Right cardiac atrium (tissue), 5 donors: ENCODE measurements at regions of chr1 and their contacts with region 1.

Region 1: GRCh38 chr1:172429331-172430127 is 9.0 kb downstream of the C1orf105 start:
- DNase-seq: no peak
- ATAC-seq: peak; percentile 39 to 51
- H3K4me3 ChIP-seq: no peak overlapping the region
- H3K27ac ChIP-seq: no peak overlapping the region
- H3K4me1 ChIP-seq: no peaks in the 10 kb centered on the region
- H3K27me3 ChIP-seq: no peaks in the 10 kb centered on the region

Region 2: DNA sequence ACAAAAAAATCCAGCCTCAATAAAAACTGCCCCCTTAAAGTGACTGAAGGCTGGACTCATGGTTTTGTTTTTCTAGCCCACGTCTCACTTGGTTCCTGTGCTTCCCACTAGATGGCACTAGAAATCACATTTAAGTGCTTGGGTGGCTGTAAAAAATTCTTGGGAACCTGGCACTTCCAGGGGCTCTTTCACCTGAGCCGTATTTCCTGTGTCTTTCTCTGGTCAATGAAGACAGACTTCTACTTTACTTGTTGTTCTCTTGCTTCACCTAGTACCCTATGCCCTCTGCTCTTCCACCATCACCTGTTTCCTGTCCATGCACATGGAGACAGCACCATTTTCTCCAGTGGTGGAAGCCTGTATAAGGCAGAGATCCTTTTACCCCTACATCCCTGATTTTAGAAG is 628.0 kb before region 1 on chr1:
- intact Hi-C with region 1: loop called in 1 of 4 experiments (anchors 10 kb)
- DNase-seq: no peak
- ATAC-seq: no peak
- H3K4me3 ChIP-seq: no peak overlapping the region
- H3K27ac ChIP-seq: no peak overlapping the region
- H3K4me1 ChIP-seq: no peaks in the 10 kb centered on the region
- H3K27me3 ChIP-seq: no peaks in the 10 kb centered on the region

Region 3: GRCh38 chr1:172002725-172003345 is 426.7 kb before region 1 on chr1:
- intact Hi-C with region 1: loop called in 1 of 4 experiments (anchors 10 kb)
- DNase-seq: no peak
- ATAC-seq: no peak
- H3K4me3 ChIP-seq: no peak overlapping the region
- H3K27ac ChIP-seq: no peak overlapping the region
- H3K4me1 ChIP-seq: no peaks in the 10 kb centered on the region
- H3K27me3 ChIP-seq: no peaks in the 10 kb centered on the region

Region 4: GRCh38 chr1:172211221-172211620 is 218.3 kb before region 1 on chr1:
- intact Hi-C with region 1: no loop called
- DNase-seq: no peak
- ATAC-seq: no peak
- H3K4me3 ChIP-seq: no peak overlapping the region
- H3K27ac ChIP-seq: no peak overlapping the region
- H3K4me1 ChIP-seq: no peaks in the 10 kb centered on the region
- H3K27me3 ChIP-seq: no peaks in the 10 kb centered on the region

Region 5: DNA sequence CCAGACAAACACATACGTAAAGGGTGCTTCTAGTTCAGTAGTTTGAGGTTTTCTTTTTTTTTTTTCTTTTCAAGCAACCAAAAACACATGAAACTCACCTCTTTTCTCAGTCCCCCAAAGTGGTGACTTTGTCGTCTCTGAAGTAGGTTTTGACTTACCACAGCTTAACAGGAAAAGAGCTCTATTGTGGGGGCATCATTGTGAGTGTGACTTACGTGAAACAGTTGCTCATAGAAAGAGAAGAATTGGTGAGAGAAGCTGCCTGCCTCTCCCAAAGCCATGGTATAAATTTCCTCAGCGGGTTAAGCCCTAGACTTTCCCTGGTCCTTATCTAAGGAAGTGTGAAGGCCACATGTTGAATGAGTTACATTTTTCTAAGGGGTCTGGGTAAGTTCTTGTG is 241.3 kb after region 1 on chr1:
- intact Hi-C with region 1: no loop called
- DNase-seq: no peak
- ATAC-seq: no peak
- H3K4me3 ChIP-seq: no peak overlapping the region
- H3K27ac ChIP-seq: no peak overlapping the region
- H3K4me1 ChIP-seq: no peaks in the 10 kb centered on the region
- H3K27me3 ChIP-seq: no peaks in the 10 kb centered on the region